BJ (cell line): ENCODE measurements at regions of chr2 and their contacts with region 1.

Region 1: GRCh38 chr2:200319548-200320337 is 13.2 kb downstream of the SPATS2L start:
- DNase-seq: no peak
- H3K4me3 ChIP-seq: no peak overlapping the region
- H3K27me3 ChIP-seq: no peaks in the 10 kb centered on the region
- CTCF ChIP-seq: no peak

Region 2: DNA sequence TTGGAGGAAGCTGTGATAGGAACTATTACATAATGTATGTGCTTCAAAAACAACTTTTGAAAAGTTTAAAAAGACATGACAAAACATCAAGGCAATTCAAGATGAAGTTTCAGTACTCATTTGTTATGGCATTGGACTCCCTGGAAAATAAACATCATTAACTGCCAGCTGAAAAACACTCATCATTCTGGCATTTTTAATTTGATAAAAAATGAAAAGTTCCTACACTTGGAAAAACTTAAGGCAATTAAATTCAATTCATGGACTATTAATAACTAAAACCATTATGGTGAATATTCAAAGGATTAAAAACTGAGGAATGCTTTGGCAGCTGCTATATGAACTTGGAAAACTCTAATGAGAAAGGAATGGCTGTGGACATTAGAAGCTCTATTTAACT is 372.9 kb before region 1 on chr2:
- CTCF ChIA-PET with region 1: no interaction called
- POLR2A ChIA-PET with region 1: no interaction called
- DNase-seq: peak; percentile 17
- H3K4me3 ChIP-seq: no peak overlapping the region
- H3K27me3 ChIP-seq: no peaks in the 10 kb centered on the region
- CTCF ChIP-seq: no peak

Region 3: GRCh38 chr2:200351815-200352214 is 32.1 kb after region 1 on chr2:
- CTCF ChIA-PET with region 1: interaction called, 3 read pairs
- POLR2A ChIA-PET with region 1: interaction called, 12 read pairs
- DNase-seq: no peak
- H3K4me3 ChIP-seq: no peak overlapping the region
- H3K27me3 ChIP-seq: no peaks in the 10 kb centered on the region
- CTCF ChIP-seq: no peak